ENCODE measurements at regions of chr12 and their contacts with region 1.

Region 1: GRCh38 chr12:121839106-121839992 is 19.3 kb downstream of the HPD start:
- DNase-seq: peak; percentile 100
- H3K4me3 Mint-ChIP-seq: peak overlapping the region; percentile 97
- H3K27ac Mint-ChIP-seq: peak overlapping the region; percentile 88
- H3K4me1 Mint-ChIP-seq: peaks cover 11% of the 10 kb centered on the region
- H3K27me3 Mint-ChIP-seq: no peaks in the 10 kb centered on the region

Region 2: GRCh38 chr12:121712461-121713256 is 126.7 kb before region 1 on chr12 and contains the start of gene TMEM120B:
- CTCF ChIA-PET with region 1: no interaction called
- intact Hi-C with region 1: loop called (anchors 1 kb)
- DNase-seq: peak; percentile 77
- H3K4me3 Mint-ChIP-seq: peak within 1 kb of the TSS; percentile 87
- H3K27ac Mint-ChIP-seq: peak within 1 kb of the TSS; percentile 77
- H3K4me1 Mint-ChIP-seq: peaks cover 19% of the 10 kb centered on the region
- H3K27me3 Mint-ChIP-seq: no peaks in the 10 kb centered on the region
- total RNA-seq, gene TMEM120B: 5.5 to 6.3 TPM

Region 3: GRCh38 chr12:121802846-121803630 is 36.3 kb before region 1 on chr12:
- CTCF ChIA-PET with region 1: no interaction called
- intact Hi-C with region 1: loop called (anchors 1 kb)
- DNase-seq: peak; percentile 95
- H3K4me3 Mint-ChIP-seq: peak overlapping the region; percentile 97
- H3K27ac Mint-ChIP-seq: peak overlapping the region; percentile 100
- H3K4me1 Mint-ChIP-seq: peaks cover 33% of the 10 kb centered on the region
- H3K27me3 Mint-ChIP-seq: no peaks in the 10 kb centered on the region

Region 4: DNA sequence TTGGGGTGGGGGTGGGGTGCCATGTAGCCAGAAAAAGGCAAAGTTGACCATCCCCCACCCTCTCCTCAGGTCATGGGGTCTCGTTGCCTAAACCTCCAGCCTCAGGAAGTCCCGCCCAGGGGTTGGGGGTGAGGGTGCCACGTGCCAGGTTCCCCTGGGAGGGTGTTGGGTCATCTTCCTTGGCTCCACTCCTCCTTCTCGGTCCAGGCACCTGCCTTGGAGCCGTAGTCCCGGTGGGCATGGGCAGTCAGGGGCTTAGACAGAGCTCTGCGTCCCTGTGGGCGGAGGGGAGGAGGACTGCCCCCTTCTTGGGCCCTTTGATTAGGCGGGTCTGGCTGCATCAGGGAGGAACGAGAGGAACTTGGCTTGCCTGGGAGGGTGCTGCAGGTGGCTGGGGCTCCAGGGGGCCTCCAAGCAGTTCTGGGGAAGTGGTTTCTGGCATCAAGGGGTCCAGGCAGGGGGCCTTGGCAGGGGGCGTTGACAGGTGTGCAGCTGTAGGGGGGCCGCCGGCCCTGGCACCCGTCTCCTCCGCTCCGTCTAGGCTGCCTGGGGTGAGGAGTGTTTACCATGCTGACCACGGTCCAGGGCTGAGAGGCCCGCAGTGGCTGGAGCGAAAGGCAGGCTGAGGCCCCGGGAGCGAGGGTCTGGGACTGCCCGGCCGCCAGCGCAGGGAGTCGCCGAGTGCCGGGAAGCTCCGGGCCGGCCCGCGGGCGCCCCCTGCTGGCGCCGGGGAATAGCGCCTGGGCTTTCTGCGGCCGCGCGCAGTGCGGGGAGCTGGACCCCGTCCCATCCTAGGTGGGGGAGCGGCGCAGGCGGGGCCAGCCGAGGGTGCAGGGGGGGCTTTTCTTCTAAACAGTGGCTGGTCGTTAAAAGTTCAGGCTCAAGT is 27.7 kb before region 1 on chr12:
- CTCF ChIA-PET with region 1: interaction called, 16 read pairs
- intact Hi-C with region 1: no loop called
- DNase-seq: peak; percentile 67
- H3K4me3 Mint-ChIP-seq: peak overlapping the region; percentile 78
- H3K27ac Mint-ChIP-seq: peak overlapping the region; percentile 86
- H3K4me1 Mint-ChIP-seq: peaks cover 52% of the 10 kb centered on the region
- H3K27me3 Mint-ChIP-seq: no peaks in the 10 kb centered on the region

Region 5: GRCh38 chr12:121917979-121918678 is 78.8 kb after region 1 on chr12 and contains the start of gene CFAP251:
- CTCF ChIA-PET with region 1: no interaction called
- intact Hi-C with region 1: loop called (anchors 1 kb)
- DNase-seq: peak; percentile 98
- H3K4me3 Mint-ChIP-seq: peak within 1 kb of the TSS; percentile 69
- H3K27ac Mint-ChIP-seq: peak within 1 kb of the TSS; percentile 78
- H3K4me1 Mint-ChIP-seq: peaks cover 16% of the 10 kb centered on the region
- H3K27me3 Mint-ChIP-seq: no peaks in the 10 kb centered on the region
- total RNA-seq, gene CFAP251: 0.20 to 0.62 TPM

Region 6: GRCh38 chr12:122078141-122079032 is 239.0 kb after region 1 on chr12 and contains the start of gene MLXIP:
- CTCF ChIA-PET with region 1: interaction called, 3 read pairs
- intact Hi-C with region 1: loop called (anchors 2 kb)
- DNase-seq: peak; percentile 91
- H3K4me3 Mint-ChIP-seq: peak within 1 kb of the TSS; percentile 85
- H3K27ac Mint-ChIP-seq: peak within 1 kb of the TSS; percentile 51
- H3K4me1 Mint-ChIP-seq: peaks cover 47% of the 10 kb centered on the region
- H3K27me3 Mint-ChIP-seq: no peaks in the 10 kb centered on the region
- total RNA-seq, gene MLXIP: 18.8 to 22.0 TPM